ENCODE measurements at regions of chr5 and their contacts with region 1.

Region 1: DNA sequence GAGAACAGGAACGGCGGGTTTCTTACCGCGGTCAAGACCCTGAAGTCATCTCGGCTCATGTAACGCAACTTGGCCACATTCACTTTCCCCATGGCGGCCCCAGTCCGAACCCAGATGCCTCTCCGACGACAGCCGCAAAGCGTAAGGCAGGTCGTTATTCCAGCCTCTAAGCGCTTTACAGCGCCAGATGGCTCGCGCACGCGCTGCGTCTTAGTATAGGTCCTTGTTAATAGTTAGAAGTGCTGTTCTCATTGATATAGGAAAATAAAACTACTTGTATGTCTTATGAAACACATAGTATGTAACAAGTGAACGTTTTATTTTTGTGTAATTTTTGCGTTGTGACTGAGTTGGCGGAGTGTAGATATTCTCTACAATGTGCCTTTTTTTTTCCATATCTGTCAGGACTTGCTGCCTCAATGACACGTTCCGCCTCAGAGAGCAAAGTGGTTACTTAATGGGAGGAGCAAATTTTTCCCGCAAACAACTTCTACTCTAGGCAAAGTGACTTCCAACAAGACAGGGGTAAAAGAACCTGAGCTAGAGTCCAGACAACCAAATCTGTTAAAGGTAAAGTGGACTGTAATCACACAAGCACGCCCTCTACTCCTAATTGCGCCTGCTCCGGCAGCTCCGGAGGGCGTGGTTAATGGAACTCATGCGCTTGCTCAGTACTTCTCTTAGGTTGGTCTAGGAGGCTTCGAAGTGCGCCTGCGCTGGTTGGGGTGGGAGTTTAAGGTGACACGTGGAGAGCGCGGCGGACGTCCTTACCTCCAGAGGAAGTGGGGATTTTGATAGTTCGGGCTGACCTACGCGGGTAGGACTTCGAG is at the start of gene RIOK2:
- DNase-seq: peak; percentile 86
- H3K4me3 Mint-ChIP-seq: peak within 1 kb of the TSS; percentile 91
- H3K27ac Mint-ChIP-seq: peak within 1 kb of the TSS; percentile 100
- H3K4me1 Mint-ChIP-seq: peaks cover 42% of the 10 kb centered on the region
- H3K27me3 Mint-ChIP-seq: peaks cover 9% of the 10 kb centered on the region
- total RNA-seq, gene RIOK2: 37.2 and 47.2 TPM in 2 replicates

Region 2: DNA sequence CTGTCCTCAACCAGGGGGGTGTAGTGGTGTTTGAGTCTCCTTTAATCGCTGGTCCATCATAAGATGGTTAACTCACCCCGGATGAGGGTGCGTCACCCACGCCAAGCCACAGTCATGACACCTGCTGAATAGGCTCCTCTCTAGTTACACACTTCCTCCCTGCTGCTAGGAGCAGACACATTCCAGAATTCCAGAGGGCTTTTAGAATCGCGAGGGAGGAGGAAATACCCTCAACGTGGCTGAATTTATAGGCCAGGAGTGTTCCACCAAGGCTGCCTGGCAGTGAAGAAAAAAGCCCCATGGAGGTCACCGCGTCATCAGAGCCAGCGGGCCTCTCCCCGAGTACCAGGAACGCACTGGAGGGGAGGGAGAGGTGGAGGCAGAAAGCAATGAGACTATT is 1365.9 kb before region 1 on chr5:
- intact Hi-C with region 1: loop called (anchors 5 kb)
- DNase-seq: no peak
- H3K4me3 Mint-ChIP-seq: peak overlapping the region; percentile 69
- H3K27ac Mint-ChIP-seq: peak overlapping the region; percentile 67
- H3K4me1 Mint-ChIP-seq: peaks cover 71% of the 10 kb centered on the region
- H3K27me3 Mint-ChIP-seq: no peaks in the 10 kb centered on the region

Region 3: DNA sequence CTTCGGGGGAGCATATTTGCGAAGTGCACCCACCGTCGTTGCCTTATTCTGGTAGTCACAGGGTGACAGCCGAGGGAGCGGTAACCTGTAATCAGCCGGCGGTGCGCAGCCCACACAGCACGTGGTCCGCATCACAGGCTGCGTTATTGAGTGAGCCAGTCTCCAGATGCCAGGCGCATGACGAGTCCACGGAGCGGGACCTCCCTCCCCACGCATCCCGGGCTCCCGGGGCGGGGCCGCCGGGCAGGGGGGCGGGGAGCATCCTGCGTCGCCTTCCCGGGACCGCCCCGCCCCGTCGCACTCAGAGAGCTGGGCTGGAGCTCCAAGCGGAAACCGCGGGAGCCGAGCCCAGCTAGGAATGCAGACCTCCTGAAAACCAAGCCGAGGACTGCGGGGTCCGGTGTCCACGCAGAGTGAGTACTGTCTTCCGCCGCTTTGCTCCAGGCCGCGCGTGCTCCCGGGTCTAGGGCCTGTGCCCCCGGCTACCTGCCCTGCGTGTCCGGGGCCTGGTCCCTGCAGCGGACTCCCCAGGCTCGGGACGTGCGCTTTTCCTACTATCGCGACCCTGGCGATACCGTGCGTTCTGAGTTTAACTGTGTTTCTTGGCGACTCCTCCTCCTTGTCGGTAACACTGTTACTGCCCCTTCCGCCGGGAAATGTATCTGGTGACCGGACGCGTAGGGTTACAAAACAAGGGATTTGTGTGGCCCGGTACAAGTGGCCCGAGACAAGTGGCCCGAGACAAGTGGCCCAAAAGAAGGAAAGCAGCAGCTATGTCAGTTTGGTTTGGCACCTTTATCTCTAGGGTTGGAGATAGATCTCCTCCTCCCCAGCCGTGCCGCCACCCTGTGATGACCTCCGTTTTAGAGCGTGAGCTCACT is 480.6 kb before region 1 on chr5:
- intact Hi-C with region 1: loop called (anchors 1 kb)
- DNase-seq: peak; percentile 65
- H3K4me3 Mint-ChIP-seq: peak overlapping the region; percentile 91
- H3K27ac Mint-ChIP-seq: peak overlapping the region; percentile 92
- H3K4me1 Mint-ChIP-seq: peaks cover 31% of the 10 kb centered on the region
- H3K27me3 Mint-ChIP-seq: no peaks in the 10 kb centered on the region

Region 4: DNA sequence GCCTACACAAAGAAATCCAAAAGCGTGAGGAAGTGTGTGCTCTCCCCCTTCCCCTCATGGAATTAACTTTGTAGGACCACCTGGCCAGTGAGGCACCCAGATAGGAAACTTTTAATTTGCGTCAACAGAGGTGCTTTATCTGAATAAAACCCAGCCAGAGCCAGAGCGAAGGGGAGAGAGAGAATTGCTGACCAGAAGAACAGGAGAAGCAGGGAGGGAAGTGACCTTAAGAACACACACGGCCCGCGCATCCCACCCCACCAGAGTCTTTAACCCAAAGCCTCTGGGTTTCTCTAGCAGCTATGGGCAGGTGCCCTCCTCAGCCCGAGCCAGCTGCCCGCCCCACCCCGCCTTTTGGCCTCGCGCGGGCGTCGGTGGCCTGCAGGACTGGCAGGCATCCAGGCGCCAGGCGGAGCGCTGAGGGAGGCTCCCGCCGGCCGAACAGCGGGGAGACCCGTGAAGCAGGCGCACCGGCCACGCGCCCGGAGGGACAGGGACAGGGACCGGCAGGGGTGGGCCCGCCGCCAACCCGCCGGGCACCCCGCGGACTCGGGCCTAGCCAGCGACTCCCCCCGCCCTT is 376.1 kb before region 1 on chr5:
- intact Hi-C with region 1: loop called (anchors 1 kb)
- DNase-seq: no peak
- H3K4me3 Mint-ChIP-seq: peak overlapping the region; percentile 99
- H3K27ac Mint-ChIP-seq: peak overlapping the region; percentile 95
- H3K4me1 Mint-ChIP-seq: peaks cover 81% of the 10 kb centered on the region
- H3K27me3 Mint-ChIP-seq: no peaks in the 10 kb centered on the region

Region 5: DNA sequence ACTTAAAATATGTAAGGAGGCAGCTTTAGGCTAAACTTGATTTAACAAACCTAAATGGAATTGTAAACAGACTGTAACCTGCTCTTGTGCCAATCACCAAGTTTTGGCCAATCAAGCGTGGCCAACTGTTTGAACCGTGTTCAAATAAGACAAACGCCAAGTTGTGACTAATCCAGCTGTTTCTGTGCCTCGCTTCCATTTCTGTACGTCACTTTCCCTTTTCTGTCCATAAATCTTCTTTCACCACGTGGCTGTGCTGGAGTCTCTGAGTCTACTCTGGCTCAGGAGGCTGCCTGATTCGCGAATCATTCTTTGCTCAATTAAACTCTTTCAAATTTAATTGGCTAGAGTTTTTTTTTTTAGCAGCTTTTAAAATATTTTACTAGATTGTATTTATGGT is 112.2 kb before region 1 on chr5:
- intact Hi-C with region 1: no loop called
- DNase-seq: no peak
- H3K4me3 Mint-ChIP-seq: no peak overlapping the region
- H3K27ac Mint-ChIP-seq: no peak overlapping the region
- H3K4me1 Mint-ChIP-seq: no peaks in the 10 kb centered on the region
- H3K27me3 Mint-ChIP-seq: peaks cover 14% of the 10 kb centered on the region

Region 6: GRCh38 chr5:97480313-97480712 is 297.0 kb after region 1 on chr5:
- intact Hi-C with region 1: no loop called
- DNase-seq: no peak
- H3K4me3 Mint-ChIP-seq: no peak overlapping the region
- H3K27ac Mint-ChIP-seq: no peak overlapping the region
- H3K4me1 Mint-ChIP-seq: no peaks in the 10 kb centered on the region
- H3K27me3 Mint-ChIP-seq: no peaks in the 10 kb centered on the region

Region 7: GRCh38 chr5:98773464-98774191 is 1590.3 kb after region 1 on chr5 and contains the start of gene RGMB:
- intact Hi-C with region 1: loop called (anchors 2 kb)
- DNase-seq: peak; percentile 77
- H3K4me3 Mint-ChIP-seq: peak within 1 kb of the TSS; percentile 93
- H3K27ac Mint-ChIP-seq: peak within 1 kb of the TSS; percentile 52
- H3K4me1 Mint-ChIP-seq: peaks cover 50% of the 10 kb centered on the region
- H3K27me3 Mint-ChIP-seq: peaks cover 79% of the 10 kb centered on the region
- total RNA-seq, gene RGMB: 0.29 and 0.39 TPM in 2 replicates

Measured in activated T-helper 1 cell treated with anti-CD3 and anti-CD28 coated beads, Interleukin-12 subunit alpha, Interleukin-12 subunit beta, Interleukin-2, Interleukin-4 antibody, amounts not matched to agents 30 ng/mL and 10 ng/mL and 1 ng/mL, durations not matched to agents 14 hours and 24 hours and 36 hours (primary cell).